ENCODE measurements at regions of chr1 and their contacts with region 1.

Region 1: DNA sequence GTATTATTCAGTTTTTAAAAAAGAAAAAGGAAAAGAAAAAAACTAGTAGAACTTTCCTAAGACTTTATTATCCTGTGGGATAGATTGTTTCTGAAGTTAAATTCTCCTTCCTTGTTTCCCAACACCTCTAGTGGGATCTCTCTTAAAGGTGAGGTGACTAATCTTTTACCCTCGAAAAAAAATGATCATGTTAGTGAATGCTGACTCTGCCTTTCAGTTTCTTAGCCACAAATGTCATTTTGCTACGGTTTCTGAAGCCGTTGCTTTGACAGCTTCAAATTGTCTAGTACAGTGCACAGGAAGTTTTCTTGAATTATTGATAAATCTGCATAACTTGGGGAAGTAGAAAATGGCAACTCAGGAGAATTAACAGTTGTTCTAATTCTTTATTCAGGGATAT is 13.0 kb upstream of the NEK7 start:
- DNase-seq: no peak
- H3K4me3 ChIP-seq: no peak overlapping the region
- H3K27ac ChIP-seq: no peak overlapping the region
- H3K4me1 ChIP-seq: no peaks in the 10 kb centered on the region
- H3K27me3 ChIP-seq: no peaks in the 10 kb centered on the region
- CTCF ChIP-seq: no peak
- EP300 ChIP-seq: no peak
- RAD21 ChIP-seq: no peak

Region 2: GRCh38 chr1:198157241-198157846 is 13.5 kb after region 1 on chr1:
- CTCF ChIA-PET with region 1: interaction called, 13 read pairs
- POLR2A ChIA-PET with region 1: no interaction called
- DNase-seq: peak; percentile 82
- H3K4me3 ChIP-seq: peak overlapping the region; percentile 75 to 97
- H3K27ac ChIP-seq: peak overlapping the region; percentile 81 to 97
- H3K4me1 ChIP-seq: peaks cover 34 to 40% of the 10 kb centered on the region in 2 experiments; a peak in 3 of 4 replicates
- H3K27me3 ChIP-seq: no peaks in the 10 kb centered on the region
- CTCF ChIP-seq: no peak
- EP300 ChIP-seq: no peak
- RAD21 ChIP-seq: no peak